B cell (primary cell): ENCODE measurements at regions of chr17 and their contacts with region 1.

Region 1: GRCh38 chr17:37406635-37407461 is at the starts of genes ACACA and TADA2A:
- DNase-seq: peak; percentile 85
- ATAC-seq: peak; percentile 95
- H3K4me3 ChIP-seq: peak within 1 kb of the TSS; percentile 71 to 99 (median 91)
- H3K4me3 Mint-ChIP-seq: peak within 1 kb of the TSS; percentile 99
- H3K27ac ChIP-seq: peak within 1 kb of the TSS; percentile 69 to 72
- H3K27ac Mint-ChIP-seq: peak within 1 kb of the TSS; percentile 97
- H3K4me1 ChIP-seq: peaks cover 4 to 22% of the 10 kb centered on the region in 2 donors
- H3K4me1 Mint-ChIP-seq: peaks cover 36% of the 10 kb centered on the region
- H3K27me3 ChIP-seq: no peaks in the 10 kb centered on the region
- H3K27me3 Mint-ChIP-seq: no peaks in the 10 kb centered on the region
- CTCF ChIP-seq: no peak
- total RNA-seq, gene ACACA: 26.2 and 29.2 TPM in 2 replicates
- total RNA-seq, gene TADA2A: 43.3 and 44.3 TPM in 2 replicates

Region 2: GRCh38 chr17:37382056-37382455 is 24.8 kb before region 1 on chr17:
- CTCF ChIA-PET with region 1: no interaction called
- POLR2A ChIA-PET with region 1: no interaction called
- intact Hi-C with region 1: no loop called
- DNase-seq: no peak
- ATAC-seq: no peak
- H3K4me3 ChIP-seq: no peak overlapping the region
- H3K4me3 Mint-ChIP-seq: no peak overlapping the region
- H3K27ac ChIP-seq: no peak overlapping the region
- H3K27ac Mint-ChIP-seq: no peak overlapping the region
- H3K4me1 ChIP-seq: no peaks in the 10 kb centered on the region
- H3K4me1 Mint-ChIP-seq: no peaks in the 10 kb centered on the region
- H3K27me3 ChIP-seq: no peaks in the 10 kb centered on the region
- H3K27me3 Mint-ChIP-seq: no peaks in the 10 kb centered on the region
- CTCF ChIP-seq: no peak

Region 3: DNA sequence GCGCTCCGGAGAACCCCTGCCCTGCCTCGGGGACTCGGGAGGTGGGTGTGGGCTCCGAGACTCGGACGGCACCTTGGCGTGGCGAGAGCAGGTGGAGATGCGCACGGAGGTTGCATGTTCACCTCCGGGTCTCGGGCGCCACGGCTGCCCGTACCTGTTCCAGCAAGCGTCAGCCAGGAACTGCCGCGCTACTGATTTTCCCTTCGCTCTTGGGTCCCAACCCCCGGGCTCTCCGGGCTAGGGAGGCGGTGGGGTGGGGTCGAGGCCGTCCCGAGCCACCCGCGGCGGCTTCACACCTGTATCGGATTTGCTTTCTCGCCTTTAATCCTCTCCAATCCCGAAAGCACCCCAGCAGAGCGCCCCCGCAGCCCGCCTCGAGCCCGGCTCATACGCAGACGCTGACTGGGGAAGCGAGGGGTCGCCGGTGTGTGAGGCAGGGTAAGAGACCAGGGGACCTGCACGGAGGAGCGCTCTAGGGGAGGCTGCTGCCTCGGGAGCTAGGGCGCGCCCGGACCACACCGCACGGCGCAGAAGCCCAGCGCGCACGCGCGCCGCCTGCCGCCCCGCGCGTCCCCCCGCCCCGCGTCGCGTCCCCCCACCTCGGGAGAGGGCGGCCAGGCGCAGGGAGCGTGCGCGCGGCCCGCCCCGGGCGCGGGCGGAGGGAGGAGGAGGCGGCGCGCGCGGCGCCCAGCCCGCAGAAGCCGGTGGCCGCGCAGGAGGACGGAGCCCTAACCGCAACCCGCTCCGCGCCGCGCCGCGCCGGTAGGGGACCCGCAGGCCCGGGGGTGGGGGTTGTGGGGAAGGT is 82.6 kb after region 1 on chr17 and contains the start of gene DUSP14:
- CTCF ChIA-PET with region 1: no interaction called
- POLR2A ChIA-PET with region 1: interaction called, 3 read pairs
- intact Hi-C with region 1: loop called (anchors 1 kb)
- DNase-seq: peak; percentile 89
- ATAC-seq: peak; percentile 80
- H3K4me3 ChIP-seq: peak within 1 kb of the TSS; percentile 61 to 80 (median 73)
- H3K4me3 Mint-ChIP-seq: peak within 1 kb of the TSS; percentile 96
- H3K27ac ChIP-seq: peak within 1 kb of the TSS in 1 of 2 donors; percentile 41
- H3K27ac Mint-ChIP-seq: peak within 1 kb of the TSS; percentile 93
- H3K4me1 ChIP-seq: peaks cover 17 to 23% of the 10 kb centered on the region in 2 donors
- H3K4me1 Mint-ChIP-seq: peaks cover 28% of the 10 kb centered on the region
- H3K27me3 ChIP-seq: peaks cover 0 to 4% (median 0%) of the 10 kb centered on the region in 4 experiments
- H3K27me3 Mint-ChIP-seq: no peaks in the 10 kb centered on the region
- CTCF ChIP-seq: no peak
- total RNA-seq, gene DUSP14: 4.9 and 5.1 TPM in 2 replicates